Aorta (tissue), 5 donors: ENCODE measurements at regions of chr2 and their contacts with region 1.

Region 1: GRCh38 chr2:217785544-217786045 is 217.2 kb downstream of the TNS1 start:
- DNase-seq: peak; percentile 85 to 93
- ATAC-seq: peak; percentile 90
- H3K4me3 ChIP-seq: no peak overlapping the region
- H3K27ac ChIP-seq: no peak overlapping the region
- H3K4me1 ChIP-seq: no peaks in the 10 kb centered on the region
- H3K27me3 ChIP-seq: no peaks in the 10 kb centered on the region

Region 2: GRCh38 chr2:217851191-217852020 is 65.8 kb after region 1 on chr2:
- intact Hi-C with region 1: no loop called
- DNase-seq: peak; percentile 71 to 78
- ATAC-seq: peak; percentile 1
- H3K4me3 ChIP-seq: no peak overlapping the region
- H3K27ac ChIP-seq: peak overlapping the region in 1 of 2 donors; percentile 73
- H3K4me1 ChIP-seq: peaks cover 0 to 2% of the 10 kb centered on the region in 2 donors
- H3K27me3 ChIP-seq: no peaks in the 10 kb centered on the region

Region 3: GRCh38 chr2:217886720-217887309 is 101.2 kb after region 1 on chr2:
- intact Hi-C with region 1: loop called (anchors 5 kb)
- DNase-seq: peak; percentile 83 to 90
- ATAC-seq: peak; percentile 65
- H3K4me3 ChIP-seq: no peak overlapping the region
- H3K27ac ChIP-seq: peak overlapping the region in 1 of 2 donors; percentile 48
- H3K4me1 ChIP-seq: no peaks in the 10 kb centered on the region
- H3K27me3 ChIP-seq: no peaks in the 10 kb centered on the region

Region 4: GRCh38 chr2:217988014-217988839 is 202.6 kb after region 1 on chr2:
- intact Hi-C with region 1: loop called (anchors 2 to 5 kb)
- DNase-seq: peak; percentile 88 to 94
- ATAC-seq: peak; percentile 89
- H3K4me3 ChIP-seq: no peak overlapping the region
- H3K27ac ChIP-seq: peak overlapping the region in 1 of 2 donors; percentile 13
- H3K4me1 ChIP-seq: no peaks in the 10 kb centered on the region
- H3K27me3 ChIP-seq: no peaks in the 10 kb centered on the region

Region 5: GRCh38 chr2:217993817-217994463 is 208.3 kb after region 1 on chr2:
- intact Hi-C with region 1: loop called (anchors 2 to 5 kb)
- DNase-seq: peak; percentile 74 to 90
- ATAC-seq: peak; percentile 71
- H3K4me3 ChIP-seq: no peak overlapping the region
- H3K27ac ChIP-seq: no peak overlapping the region
- H3K4me1 ChIP-seq: peaks cover 0 to 2% of the 10 kb centered on the region in 2 donors
- H3K27me3 ChIP-seq: no peaks in the 10 kb centered on the region

Region 6: DNA sequence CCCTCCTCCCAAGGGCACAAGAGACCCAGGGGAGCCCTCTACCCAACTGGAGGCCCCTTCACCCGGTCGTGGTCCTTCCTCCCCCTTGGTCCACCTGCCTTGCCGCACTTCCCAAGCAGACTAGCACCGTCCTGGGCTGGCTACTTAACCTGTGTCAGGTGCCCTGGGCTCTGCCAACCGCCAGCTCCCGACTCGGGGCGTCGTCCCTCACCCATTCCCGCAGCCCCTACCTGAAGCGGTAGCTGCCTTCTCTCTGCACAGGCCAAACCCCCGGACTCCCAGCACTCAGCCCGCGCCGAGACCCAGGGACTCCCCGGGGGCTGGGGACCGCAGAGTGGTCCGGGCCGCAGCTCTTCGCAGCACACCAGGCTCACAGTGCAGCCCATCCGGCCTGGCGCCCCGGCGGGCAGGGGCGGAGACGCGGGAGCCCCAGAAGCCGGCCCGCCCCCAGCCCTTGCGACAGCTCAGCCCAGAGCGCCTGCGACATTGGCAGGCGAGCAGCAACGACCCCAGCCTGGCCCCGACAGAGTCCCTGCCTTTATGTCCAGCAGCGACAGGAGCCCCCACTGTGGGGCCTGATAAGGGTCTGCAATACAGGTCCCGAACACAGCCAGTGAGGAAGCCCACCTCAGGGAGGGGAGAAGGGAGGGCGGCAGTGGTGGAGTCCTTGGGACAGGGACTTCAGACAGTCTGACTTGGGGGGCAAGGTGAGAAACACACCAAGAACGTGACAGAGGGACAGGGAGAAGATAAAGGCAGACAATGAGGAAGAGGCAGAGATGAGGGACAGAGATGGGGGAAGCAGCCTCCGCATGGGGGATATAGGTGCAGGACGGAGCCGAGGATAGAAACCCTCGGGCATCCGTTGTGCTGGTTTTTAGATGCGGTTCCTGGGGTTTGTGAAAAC is 248.2 kb after region 1 on chr2:
- intact Hi-C with region 1: loop called (anchors 5 kb)
- DNase-seq: peak in 1 of 2 donors; percentile 78
- ATAC-seq: no peak
- H3K4me3 ChIP-seq: no peak overlapping the region
- H3K27ac ChIP-seq: no peak overlapping the region
- H3K4me1 ChIP-seq: no peaks in the 10 kb centered on the region
- H3K27me3 ChIP-seq: no peaks in the 10 kb centered on the region

Region 7: GRCh38 chr2:218063486-218063885 is 277.9 kb after region 1 on chr2:
- intact Hi-C with region 1: loop called in 1 of 2 experiments (anchors 10 kb)
- DNase-seq: peak in 1 of 2 donors; percentile 67
- ATAC-seq: no peak
- H3K4me3 ChIP-seq: no peak overlapping the region
- H3K27ac ChIP-seq: no peak overlapping the region
- H3K4me1 ChIP-seq: no peaks in the 10 kb centered on the region
- H3K27me3 ChIP-seq: no peaks in the 10 kb centered on the region